Activated naive CD4-positive, alpha-beta T cell treated with anti-CD3 and anti-CD28 coated beads, Interleukin-2, amount 10 ng/mL, durations not matched to agents 7 days and 5 days (primary cell): ENCODE measurements at regions of chr16 and their contacts with region 1.

Region 1: GRCh38 chr16:66315210-66315825 is 51.2 kb upstream of the CDH5 start:
- DNase-seq: peak; percentile 62
- H3K4me3 Mint-ChIP-seq: no peak overlapping the region
- H3K27ac Mint-ChIP-seq: no peak overlapping the region
- H3K4me1 Mint-ChIP-seq: no peaks in the 10 kb centered on the region
- H3K27me3 Mint-ChIP-seq: peaks cover 12% of the 10 kb centered on the region

Region 2: GRCh38 chr16:66275775-66276428 is 39.4 kb before region 1 on chr16:
- CTCF ChIA-PET with region 1: interaction called, 31 read pairs
- DNase-seq: peak; percentile 36
- H3K4me3 Mint-ChIP-seq: no peak overlapping the region
- H3K27ac Mint-ChIP-seq: no peak overlapping the region
- H3K4me1 Mint-ChIP-seq: peaks cover 2% of the 10 kb centered on the region
- H3K27me3 Mint-ChIP-seq: peaks cover 29% of the 10 kb centered on the region

Region 3: DNA sequence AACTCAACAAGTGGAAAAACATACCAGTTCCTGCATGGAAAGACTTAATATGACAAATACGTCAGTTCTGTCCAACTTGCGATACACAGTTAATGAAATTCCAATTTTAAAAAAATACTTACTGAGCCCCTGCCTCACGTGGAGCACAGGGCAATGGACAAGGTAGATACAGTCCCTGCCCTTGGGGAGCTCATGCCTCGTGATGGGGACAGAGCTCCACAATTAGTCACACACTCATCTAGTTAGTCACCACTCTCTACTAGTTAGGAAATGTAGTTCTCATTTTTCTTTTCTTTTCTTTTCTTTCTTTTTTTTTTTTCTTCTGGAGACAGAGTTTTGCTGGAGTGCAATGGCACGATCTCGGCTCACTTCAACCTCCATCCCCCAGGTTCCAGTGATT is 23.5 kb before region 1 on chr16:
- CTCF ChIA-PET with region 1: no interaction called
- DNase-seq: no peak
- H3K4me3 Mint-ChIP-seq: no peak overlapping the region
- H3K27ac Mint-ChIP-seq: no peak overlapping the region
- H3K4me1 Mint-ChIP-seq: no peaks in the 10 kb centered on the region
- H3K27me3 Mint-ChIP-seq: peaks cover 26% of the 10 kb centered on the region

Region 4: GRCh38 chr16:66369055-66369592 is 53.8 kb after region 1 on chr16:
- CTCF ChIA-PET with region 1: no interaction called
- DNase-seq: no peak
- H3K4me3 Mint-ChIP-seq: no peak overlapping the region
- H3K27ac Mint-ChIP-seq: no peak overlapping the region
- H3K4me1 Mint-ChIP-seq: peaks cover 6% of the 10 kb centered on the region
- H3K27me3 Mint-ChIP-seq: peaks cover 25% of the 10 kb centered on the region